ENCODE measurements at regions of chr2 and their contacts with region 1.

Region 1: DNA sequence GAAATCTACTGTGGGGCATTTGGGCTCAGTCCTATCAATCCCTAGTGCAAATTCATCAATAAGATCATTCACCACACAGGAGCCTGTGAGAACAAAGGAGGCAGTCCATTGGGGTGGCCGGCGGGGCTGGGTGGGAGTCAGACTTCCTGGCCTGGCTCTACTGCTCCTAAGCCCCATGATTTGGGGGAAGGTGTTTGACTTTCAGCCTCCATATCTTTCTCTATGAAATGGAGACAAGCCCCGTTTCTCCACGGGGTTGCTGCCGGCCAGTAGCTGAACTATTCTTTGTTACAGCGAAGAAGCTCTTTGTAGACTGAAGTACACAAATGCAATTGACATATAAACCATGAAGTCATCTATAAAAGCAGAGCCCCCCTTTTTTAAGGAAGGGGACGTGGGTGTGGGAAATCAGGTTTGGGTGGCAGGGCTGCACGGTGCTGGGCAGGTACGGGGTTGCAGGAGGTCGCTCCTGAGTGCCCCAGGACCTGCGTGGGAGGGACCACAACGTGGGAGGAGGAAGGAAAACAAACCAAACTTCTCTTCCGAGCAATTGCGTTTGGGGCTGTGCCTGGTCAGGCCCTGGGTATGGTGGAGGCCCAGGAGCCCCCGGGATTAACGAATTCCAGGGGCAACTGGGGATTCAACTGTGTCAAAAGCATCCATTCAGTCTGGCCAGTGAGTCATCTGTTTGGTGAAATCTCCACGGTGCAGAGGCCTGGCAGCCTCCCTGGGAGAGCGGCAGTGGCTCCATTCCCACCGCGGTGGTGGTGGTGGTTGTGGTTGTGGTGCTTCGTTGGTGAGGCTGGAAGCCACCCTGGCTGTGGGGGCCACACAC is 18.2 kb downstream of the FBLN7 start:
- DNase-seq: no peak
- H3K4me3 ChIP-seq: no peak overlapping the region
- H3K27ac ChIP-seq: no peak overlapping the region
- H3K4me1 ChIP-seq: peaks cover 38% of the 10 kb centered on the region
- CTCF ChIP-seq: no peak

Region 2: DNA sequence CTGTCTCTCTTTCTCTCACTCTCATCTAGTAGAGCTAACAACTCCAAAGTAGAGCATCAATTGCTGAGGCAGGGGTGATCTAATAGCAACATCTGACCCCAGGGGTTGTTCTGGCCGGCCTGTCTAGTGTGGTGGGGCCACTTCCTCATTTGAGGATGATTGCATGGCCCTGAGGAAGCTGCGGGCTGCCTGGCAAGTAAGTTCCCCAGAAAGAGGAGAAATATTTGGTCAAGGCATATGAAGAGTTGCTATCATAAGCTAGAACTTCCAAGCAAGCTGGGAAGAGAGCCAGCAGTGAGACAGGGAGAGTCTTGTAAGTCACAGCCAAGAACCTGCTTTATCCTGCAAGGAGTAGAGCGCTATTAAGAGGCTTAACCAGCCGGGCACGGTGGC is 152.1 kb before region 1 on chr2:
- CTCF ChIA-PET with region 1: no interaction called
- POLR2A ChIA-PET with region 1: no interaction called
- intact Hi-C with region 1: no loop called
- DNase-seq: peak; percentile 52
- H3K4me3 ChIP-seq: no peak overlapping the region
- H3K27ac ChIP-seq: no peak overlapping the region
- H3K4me1 ChIP-seq: peaks cover 28% of the 10 kb centered on the region
- CTCF ChIP-seq: no peak

Region 3: GRCh38 chr2:112092286-112093041 is 63.9 kb before region 1 on chr2:
- CTCF ChIA-PET with region 1: no interaction called
- POLR2A ChIA-PET with region 1: no interaction called
- intact Hi-C with region 1: no loop called
- DNase-seq: no peak
- H3K4me3 ChIP-seq: no peak overlapping the region
- H3K27ac ChIP-seq: no peak overlapping the region
- H3K4me1 ChIP-seq: peaks cover 6% of the 10 kb centered on the region
- CTCF ChIP-seq: no peak

Region 4: DNA sequence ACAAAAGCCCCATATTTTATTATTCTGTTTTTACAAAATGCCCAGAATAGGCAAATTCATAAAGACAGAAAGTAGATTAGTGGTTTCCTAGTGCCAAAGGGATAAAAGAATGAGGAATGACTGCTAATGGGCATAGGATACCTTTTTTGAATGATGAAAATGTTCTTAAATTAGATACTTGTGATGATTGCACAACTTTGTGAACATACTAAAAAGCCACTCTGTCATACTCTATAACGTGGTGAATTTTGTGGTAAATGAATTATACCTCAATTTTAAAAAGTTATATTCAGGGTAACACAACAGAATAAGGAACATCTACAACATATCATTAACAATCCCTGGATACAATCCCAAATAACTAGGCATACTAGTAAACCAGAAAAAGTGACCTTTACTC is 27.3 kb before region 1 on chr2:
- CTCF ChIA-PET with region 1: no interaction called
- POLR2A ChIA-PET with region 1: no interaction called
- intact Hi-C with region 1: no loop called
- DNase-seq: no peak
- H3K4me3 ChIP-seq: no peak overlapping the region
- H3K27ac ChIP-seq: no peak overlapping the region
- H3K4me1 ChIP-seq: no peaks in the 10 kb centered on the region
- CTCF ChIP-seq: no peak

Region 5: DNA sequence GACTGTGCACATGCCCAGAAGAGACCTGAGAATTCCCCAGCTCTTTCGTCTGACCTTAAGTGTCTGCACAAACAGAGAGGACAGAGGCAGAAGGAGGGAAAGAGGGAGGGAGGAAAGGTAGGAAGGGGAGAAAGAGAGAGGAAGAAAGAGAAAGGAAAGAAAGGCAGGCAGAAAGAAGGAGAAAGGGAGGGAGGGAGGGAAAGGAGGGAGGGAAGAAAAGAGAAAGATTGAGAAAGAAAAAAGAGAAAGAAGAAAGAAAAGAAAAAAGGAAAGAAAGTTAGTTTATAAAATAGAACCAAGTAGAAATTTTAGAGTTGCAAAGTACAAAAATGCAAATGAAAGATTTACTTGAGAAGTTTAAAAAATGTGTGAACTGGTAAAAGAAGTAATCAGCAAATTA is 378.5 kb after region 1 on chr2:
- CTCF ChIA-PET with region 1: no interaction called
- POLR2A ChIA-PET with region 1: interaction called, 13 read pairs
- intact Hi-C with region 1: no loop called
- DNase-seq: no peak
- H3K4me3 ChIP-seq: no peak overlapping the region
- H3K27ac ChIP-seq: no peak overlapping the region
- H3K4me1 ChIP-seq: no peaks in the 10 kb centered on the region
- CTCF ChIP-seq: no peak

Region 6: GRCh38 chr2:113157118-113157896 is 1000.9 kb after region 1 on chr2:
- CTCF ChIA-PET with region 1: no interaction called
- POLR2A ChIA-PET with region 1: no interaction called
- intact Hi-C with region 1: no loop called
- DNase-seq: no peak
- H3K4me3 ChIP-seq: no peak overlapping the region
- H3K27ac ChIP-seq: no peak overlapping the region
- H3K4me1 ChIP-seq: no peaks in the 10 kb centered on the region
- CTCF ChIP-seq: no peak

Measured in OCI-LY7 (cell line).